Endothelial cell of umbilical vein (primary cell): ENCODE measurements at regions of chr11 and their contacts with region 1.

Region 1: DNA sequence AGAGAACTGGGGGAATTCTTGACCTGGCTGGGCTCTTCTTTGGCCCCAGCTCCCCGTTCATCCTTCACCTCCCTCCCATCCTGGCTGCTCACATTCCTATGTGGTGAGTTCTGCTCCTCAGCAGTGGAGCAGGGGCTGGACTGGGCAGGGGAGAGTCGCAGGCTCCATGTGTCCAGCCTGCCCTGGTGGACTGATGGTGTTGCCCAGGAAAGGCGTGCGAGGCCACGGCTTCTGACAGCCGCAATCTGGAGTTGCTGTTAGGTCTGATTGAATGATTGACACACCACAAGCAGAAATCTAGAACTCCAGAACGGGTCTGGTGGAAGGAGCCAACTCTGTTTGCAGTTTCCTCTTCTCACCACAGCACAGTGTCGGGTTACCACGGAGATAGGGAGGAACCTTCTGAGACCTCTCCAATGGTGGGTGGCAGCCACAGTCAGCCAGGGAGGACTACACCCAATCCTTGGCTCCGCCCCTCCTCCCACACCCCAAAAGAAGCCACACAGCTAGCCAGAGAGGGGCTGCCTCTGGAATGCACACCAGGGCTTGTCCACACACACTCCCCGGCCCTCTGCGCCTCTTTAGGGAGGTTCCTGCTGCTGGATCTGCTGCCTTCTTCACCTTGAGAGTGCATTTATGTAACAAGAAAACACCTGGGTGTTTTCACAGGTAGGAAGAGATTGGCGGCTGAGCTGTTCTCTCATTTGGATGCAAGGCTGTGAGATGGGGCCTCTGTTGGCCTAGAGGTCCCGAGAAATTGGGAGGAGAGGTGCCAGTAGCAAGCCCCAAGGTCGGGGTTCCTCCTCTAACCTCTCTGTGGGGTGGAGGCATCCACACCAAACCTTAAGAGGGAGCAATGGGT is 56.4 kb upstream of the CD44 start:
- DNase-seq: no peak
- H3K4me3 ChIP-seq: no peak overlapping the region
- H3K27ac ChIP-seq: no peak overlapping the region
- H3K4me1 ChIP-seq: peaks cover 26% of the 10 kb centered on the region
- H3K27me3 ChIP-seq: no peaks in the 10 kb centered on the region
- CTCF ChIP-seq: no peak
- POLR2A ChIP-seq: no peak

Region 2: DNA sequence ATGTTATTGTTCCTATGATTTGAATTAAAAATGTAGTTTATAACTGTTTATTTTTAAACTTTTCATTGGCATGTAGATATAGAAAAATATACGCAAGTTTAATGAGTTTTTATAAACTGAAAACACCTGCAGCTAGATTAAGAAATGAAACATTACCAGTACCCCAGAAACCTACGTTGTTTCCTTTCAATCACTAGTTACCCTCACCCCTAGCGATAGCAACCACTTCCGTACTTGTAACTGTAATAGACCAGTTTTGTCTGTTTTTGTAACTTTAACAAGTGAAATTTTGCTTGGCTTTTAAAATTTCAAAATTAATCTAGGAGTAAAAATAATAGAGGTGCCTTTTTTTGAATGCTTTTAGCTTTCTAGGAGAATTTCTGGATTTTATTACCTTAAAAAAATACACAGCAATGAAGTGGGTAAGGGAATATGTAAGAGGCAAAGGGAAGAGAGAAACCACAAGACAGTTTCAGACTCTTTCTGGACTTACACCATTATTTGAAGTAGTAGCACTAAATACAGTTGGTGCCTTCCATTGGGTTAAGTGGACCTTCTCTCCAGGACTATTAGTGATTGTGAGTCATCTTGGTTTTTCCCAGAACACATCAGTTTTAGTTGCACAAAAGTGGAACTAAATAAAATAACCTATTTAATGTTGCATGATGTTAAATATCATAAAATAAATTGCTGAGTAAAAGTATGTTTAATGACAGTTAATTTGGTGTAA is 995.8 kb before region 1 on chr11:
- CTCF ChIA-PET with region 1: no interaction called
- POLR2A ChIA-PET with region 1: no interaction called
- dilution Hi-C with region 1: no loop called
- intact Hi-C with region 1: no loop called
- DNase-seq: no peak
- H3K4me3 ChIP-seq: no peak overlapping the region
- H3K27ac ChIP-seq: no peak overlapping the region
- H3K4me1 ChIP-seq: no peaks in the 10 kb centered on the region
- H3K27me3 ChIP-seq: no peaks in the 10 kb centered on the region
- CTCF ChIP-seq: no peak
- POLR2A ChIP-seq: no peak

Region 3: GRCh38 chr11:34977089-34977906 is 105.3 kb before region 1 on chr11:
- CTCF ChIA-PET with region 1: no interaction called
- POLR2A ChIA-PET with region 1: no interaction called
- dilution Hi-C with region 1: no loop called
- intact Hi-C with region 1: loop called (anchors 5 kb)
- DNase-seq: peak; percentile 79
- H3K4me3 ChIP-seq: peak overlapping the region in 2 of 3 experiments; percentile 23 to 42
- H3K27ac ChIP-seq: peak overlapping the region; percentile 75
- H3K4me1 ChIP-seq: peaks cover 41% of the 10 kb centered on the region
- H3K27me3 ChIP-seq: no peaks in the 10 kb centered on the region
- CTCF ChIP-seq: no peak
- POLR2A ChIP-seq: no peak

Region 4: GRCh38 chr11:35030716-35031213 is 51.8 kb before region 1 on chr11:
- CTCF ChIA-PET with region 1: interaction called, 7 read pairs
- POLR2A ChIA-PET with region 1: no interaction called
- dilution Hi-C with region 1: no loop called
- intact Hi-C with region 1: loop called (anchors 5 kb)
- DNase-seq: peak; percentile 73
- H3K4me3 ChIP-seq: no peak overlapping the region
- H3K27ac ChIP-seq: peak overlapping the region; percentile 82
- H3K4me1 ChIP-seq: peaks cover 27% of the 10 kb centered on the region
- H3K27me3 ChIP-seq: no peaks in the 10 kb centered on the region
- CTCF ChIP-seq: no peak
- POLR2A ChIP-seq: no peak

Region 5: DNA sequence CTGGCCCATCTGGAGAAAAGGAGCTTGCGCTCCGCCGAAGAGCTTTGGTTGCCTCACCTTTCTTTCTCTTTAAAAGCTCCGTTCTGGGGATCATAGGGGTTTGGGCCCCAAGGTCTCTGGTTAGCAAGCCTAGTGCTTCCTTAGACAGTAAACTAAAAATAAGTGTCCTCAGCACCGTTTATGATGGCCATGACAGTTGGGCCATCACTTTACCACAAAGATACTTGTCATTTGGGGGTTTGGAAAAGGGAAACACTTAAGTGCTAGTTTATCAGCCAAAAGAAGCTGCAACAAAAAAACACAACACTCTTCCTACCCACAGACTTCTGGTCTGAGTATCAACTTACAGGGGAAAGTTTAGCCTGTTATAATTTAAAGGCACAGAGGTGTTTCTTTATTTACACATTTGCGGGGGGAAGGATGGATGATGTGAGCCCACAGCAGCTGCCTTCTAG is 32.0 kb before region 1 on chr11:
- CTCF ChIA-PET with region 1: no interaction called
- POLR2A ChIA-PET with region 1: no interaction called
- dilution Hi-C with region 1: no loop called
- intact Hi-C with region 1: no loop called
- DNase-seq: no peak
- H3K4me3 ChIP-seq: no peak overlapping the region
- H3K27ac ChIP-seq: no peak overlapping the region
- H3K4me1 ChIP-seq: no peaks in the 10 kb centered on the region
- H3K27me3 ChIP-seq: peaks cover 0 to 2% of the 10 kb centered on the region in 2 experiments
- CTCF ChIP-seq: no peak
- POLR2A ChIP-seq: no peak

Region 6: GRCh38 chr11:35071722-35072121 is 10.8 kb before region 1 on chr11:
- CTCF ChIA-PET with region 1: no interaction called
- POLR2A ChIA-PET with region 1: no interaction called
- dilution Hi-C with region 1: no loop called
- intact Hi-C with region 1: no loop called
- DNase-seq: no peak
- H3K4me3 ChIP-seq: no peak overlapping the region
- H3K27ac ChIP-seq: no peak overlapping the region
- H3K4me1 ChIP-seq: peaks cover 2% of the 10 kb centered on the region
- H3K27me3 ChIP-seq: no peaks in the 10 kb centered on the region
- CTCF ChIP-seq: no peak
- POLR2A ChIP-seq: no peak

Region 7: DNA sequence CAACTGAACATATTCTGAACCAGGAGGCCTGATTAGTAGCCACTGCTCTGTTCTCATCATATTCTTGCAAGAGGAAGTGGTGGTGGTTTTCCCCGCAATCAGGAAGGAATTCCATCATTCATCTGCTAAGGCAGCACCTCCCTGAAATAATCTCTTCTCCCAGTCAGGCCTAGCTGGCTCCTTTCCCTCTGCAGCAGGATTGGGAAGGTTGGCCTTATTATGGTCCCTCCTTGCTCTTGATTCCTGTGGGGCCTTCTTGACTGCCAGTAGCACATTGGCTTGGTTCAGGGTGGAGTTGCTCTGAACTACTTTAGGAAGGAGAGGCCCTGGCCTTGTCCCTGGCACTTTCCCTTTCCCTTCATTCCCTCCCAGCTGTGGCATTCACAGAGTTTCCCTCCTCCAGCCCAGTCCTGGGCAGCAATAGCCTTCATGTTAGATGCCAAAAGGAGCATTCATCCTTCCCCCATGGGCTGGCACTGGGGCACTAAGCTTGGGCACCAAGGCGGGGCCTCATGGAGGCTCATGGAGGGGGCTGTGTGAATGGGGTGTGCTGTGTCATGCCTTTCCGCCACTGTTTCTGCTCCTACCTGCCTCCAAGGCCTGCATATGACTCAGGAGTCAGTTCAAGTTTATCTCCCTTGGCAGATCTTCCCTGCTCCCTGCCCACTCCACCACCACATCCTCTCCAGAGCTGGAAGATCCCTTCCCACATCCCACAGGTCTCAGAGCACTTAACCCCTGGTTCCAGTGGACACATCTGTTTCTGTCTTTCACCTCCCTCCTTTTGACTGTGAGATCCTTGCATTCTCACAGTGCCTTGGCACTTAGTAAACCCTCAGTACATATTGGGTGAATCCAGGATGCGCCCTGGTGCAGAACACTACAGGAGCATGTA is 28.9 kb after region 1 on chr11:
- CTCF ChIA-PET with region 1: interaction called, 3 read pairs
- POLR2A ChIA-PET with region 1: no interaction called
- dilution Hi-C with region 1: no loop called
- intact Hi-C with region 1: loop called (anchors 2 kb)
- DNase-seq: peak; percentile 47
- H3K4me3 ChIP-seq: no peak overlapping the region
- H3K27ac ChIP-seq: peak overlapping the region; percentile 41
- H3K4me1 ChIP-seq: peaks cover 15% of the 10 kb centered on the region
- H3K27me3 ChIP-seq: no peaks in the 10 kb centered on the region
- CTCF ChIP-seq: no peak
- POLR2A ChIP-seq: peak; percentile 33

Region 8: DNA sequence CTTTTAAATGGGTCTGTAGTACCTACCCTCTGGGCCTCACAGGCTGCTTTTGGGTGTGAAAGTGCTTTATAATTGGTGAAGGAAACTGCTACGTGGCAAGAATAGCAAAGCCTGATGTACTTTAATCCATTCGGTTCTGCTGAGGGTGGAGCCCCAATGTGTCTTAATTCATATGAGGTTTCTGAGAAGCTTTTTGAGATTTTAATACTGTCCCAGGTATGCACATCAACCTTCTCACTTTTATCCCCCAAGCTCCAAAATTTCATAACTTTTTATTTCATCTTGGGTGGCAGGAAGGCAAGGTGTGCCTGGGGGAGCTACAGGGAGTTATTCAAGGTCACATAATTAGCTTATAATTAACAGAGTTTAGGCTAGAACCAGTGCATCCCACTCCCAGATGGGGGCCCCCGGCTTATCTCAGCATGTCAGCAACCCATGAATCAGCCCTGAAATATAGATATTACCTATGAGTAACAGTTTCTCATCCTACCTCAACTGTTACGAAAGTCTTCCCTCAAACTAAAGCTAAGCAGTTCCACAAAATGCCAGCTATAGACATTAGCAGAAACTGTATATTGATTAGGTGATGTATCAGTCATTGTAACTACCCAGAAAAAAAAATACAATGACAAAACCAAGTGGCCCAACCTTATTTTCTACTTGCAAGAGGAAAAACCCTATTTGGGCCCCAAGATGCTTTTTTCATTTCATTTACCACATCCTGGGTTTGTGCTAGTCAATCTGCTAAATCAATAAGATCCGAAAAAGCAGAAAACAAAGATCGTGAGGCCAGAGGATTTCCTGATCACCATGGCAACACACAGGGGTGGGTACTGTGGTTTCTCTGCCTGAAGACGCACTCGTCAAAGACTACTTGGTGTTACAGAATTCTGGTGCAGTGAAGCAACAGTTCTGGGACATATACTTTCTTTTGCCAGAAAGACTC is 83.1 kb after region 1 on chr11:
- CTCF ChIA-PET with region 1: no interaction called
- POLR2A ChIA-PET with region 1: no interaction called
- dilution Hi-C with region 1: no loop called
- intact Hi-C with region 1: loop called (anchors 2 kb)
- DNase-seq: peak; percentile 48
- H3K4me3 ChIP-seq: no peak overlapping the region
- H3K27ac ChIP-seq: peak overlapping the region; percentile 84
- H3K4me1 ChIP-seq: peaks cover 39% of the 10 kb centered on the region
- H3K27me3 ChIP-seq: no peaks in the 10 kb centered on the region
- CTCF ChIP-seq: no peak
- POLR2A ChIP-seq: no peak

Region 9: DNA sequence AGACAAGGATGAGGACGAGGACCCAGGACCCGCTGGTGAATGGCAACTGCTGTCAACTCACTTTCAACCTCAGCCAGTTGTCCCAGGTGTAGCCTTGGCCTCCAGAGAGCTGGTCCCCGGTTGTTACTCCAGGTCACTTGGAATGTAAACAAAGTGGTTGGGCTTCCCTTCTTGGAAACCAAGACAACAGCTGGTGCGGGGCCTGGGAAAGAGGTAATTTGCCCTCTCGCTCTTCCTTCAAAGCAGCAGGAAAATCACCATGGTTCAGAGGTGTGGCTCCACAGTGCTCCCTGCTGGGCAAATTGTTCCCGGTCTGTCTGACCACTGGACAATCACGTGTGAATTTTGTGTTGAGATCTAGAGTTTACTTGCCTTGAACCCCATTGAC is 321.8 kb after region 1 on chr11:
- CTCF ChIA-PET with region 1: no interaction called
- POLR2A ChIA-PET with region 1: no interaction called
- dilution Hi-C with region 1: no loop called
- intact Hi-C with region 1: no loop called
- DNase-seq: peak; percentile 25
- H3K4me3 ChIP-seq: no peak overlapping the region
- H3K27ac ChIP-seq: no peak overlapping the region
- H3K4me1 ChIP-seq: no peaks in the 10 kb centered on the region
- H3K27me3 ChIP-seq: peaks cover 5 to 19% of the 10 kb centered on the region in 2 experiments
- CTCF ChIP-seq: peak; percentile 51 to 52
- POLR2A ChIP-seq: no peak